Activated CD4-positive, alpha-beta T cell treated with anti-CD3 and anti-CD28 coated beads for 36 hours (primary cell): ENCODE measurements at regions of chr2 and their contacts with region 1.

Region 1: DNA sequence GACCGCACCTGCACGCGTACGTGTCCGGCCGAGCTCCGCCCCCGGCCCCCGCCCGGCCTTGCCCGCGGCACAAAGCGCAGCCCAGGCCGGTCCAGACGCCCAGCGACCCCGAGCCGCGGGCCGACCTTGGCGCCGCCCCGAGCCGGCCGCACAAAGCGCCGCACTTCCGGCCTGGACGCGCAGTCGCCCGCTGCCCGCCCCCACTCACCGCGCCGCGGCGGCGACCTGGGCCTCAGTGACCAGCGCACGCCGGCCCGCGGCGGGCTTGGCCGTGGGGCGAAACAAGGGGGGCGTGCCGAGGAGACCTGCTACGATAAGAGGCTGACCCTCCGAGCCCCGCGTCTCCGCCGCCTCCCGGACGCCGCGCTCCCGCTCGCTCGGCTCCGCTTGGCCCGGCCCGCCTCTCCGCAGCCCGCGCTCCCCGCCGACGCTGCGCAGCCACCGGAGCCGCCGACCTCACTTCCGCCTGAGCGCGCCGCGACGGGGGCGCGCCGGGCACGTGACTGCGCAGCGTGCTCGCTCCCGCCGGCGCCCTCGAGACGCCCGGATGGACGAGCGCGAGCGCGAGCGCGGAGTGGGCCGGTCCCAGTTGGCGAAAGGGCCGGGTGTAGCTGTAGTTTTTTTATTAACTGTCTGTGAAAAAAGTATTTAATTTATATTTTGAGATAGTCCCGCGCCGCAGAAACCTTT is at the start of gene FAM168B:
- DNase-seq: peak; percentile 93
- ATAC-seq: peak; percentile 85
- H3K4me3 Mint-ChIP-seq: peak within 1 kb of the TSS; percentile 81
- H3K27ac Mint-ChIP-seq: peak within 1 kb of the TSS; percentile 97
- H3K4me1 Mint-ChIP-seq: peaks cover 26% of the 10 kb centered on the region
- H3K27me3 Mint-ChIP-seq: no peaks in the 10 kb centered on the region
- total RNA-seq, gene FAM168B: 59.8 to 74.7 TPM

Region 2: DNA sequence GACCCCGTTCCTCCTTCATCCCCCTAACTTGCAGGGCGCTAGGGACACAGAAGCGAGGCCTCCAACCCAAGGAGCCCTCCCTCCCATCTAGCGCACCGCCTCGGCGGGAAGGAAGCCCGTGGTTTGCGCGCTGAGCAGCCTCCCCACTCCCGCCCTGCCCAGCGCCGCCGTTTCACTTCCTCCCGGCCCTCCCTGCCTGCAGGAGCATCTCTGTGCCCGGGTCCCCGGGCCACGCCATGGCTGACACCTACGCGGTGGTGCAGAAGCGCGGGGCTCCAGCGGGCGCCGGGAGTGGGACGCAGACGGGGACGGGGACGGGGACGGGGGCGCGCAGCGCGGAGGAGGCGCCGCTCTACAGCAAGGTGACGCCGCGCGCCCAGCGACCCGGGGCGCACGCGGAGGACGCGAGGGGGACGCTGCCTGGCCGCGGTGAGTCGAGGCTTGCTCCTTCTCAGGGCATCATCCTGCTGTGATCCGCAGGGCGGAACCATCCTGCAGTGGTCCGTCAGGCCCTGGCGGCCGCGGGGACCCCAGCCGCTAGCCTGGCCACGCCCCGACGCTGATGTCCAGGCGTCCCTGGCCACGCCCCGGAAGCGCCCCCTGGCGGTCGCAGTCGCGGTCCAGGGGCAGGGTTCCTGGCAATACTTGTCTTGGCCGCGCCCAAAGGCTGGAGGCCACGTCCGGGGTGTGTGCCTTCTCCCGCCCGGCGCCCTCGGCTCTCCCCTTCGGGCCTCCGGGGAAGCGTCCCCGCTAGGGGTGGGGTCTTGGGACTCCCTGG is 720.9 kb before region 1 on chr2:
- CTCF ChIA-PET with region 1: no interaction called
- POLR2A ChIA-PET with region 1: no interaction called
- intact Hi-C with region 1: loop called in 1 of 2 experiments (anchors 10 kb)
- DNase-seq: peak; percentile 85
- ATAC-seq: peak; percentile 68
- H3K4me3 Mint-ChIP-seq: peak overlapping the region; percentile 84
- H3K27ac Mint-ChIP-seq: peak overlapping the region; percentile 96
- H3K4me1 Mint-ChIP-seq: peaks cover 60% of the 10 kb centered on the region
- H3K27me3 Mint-ChIP-seq: no peaks in the 10 kb centered on the region

Region 3: GRCh38 chr2:130727286-130728018 is 365.7 kb before region 1 on chr2:
- CTCF ChIA-PET with region 1: no interaction called
- POLR2A ChIA-PET with region 1: no interaction called
- intact Hi-C with region 1: loop called in 1 of 2 experiments (anchors 1 kb)
- DNase-seq: peak; percentile 93
- ATAC-seq: peak; percentile 97
- H3K4me3 Mint-ChIP-seq: peak overlapping the region; percentile 67
- H3K27ac Mint-ChIP-seq: peak overlapping the region; percentile 55
- H3K4me1 Mint-ChIP-seq: peaks cover 3% of the 10 kb centered on the region
- H3K27me3 Mint-ChIP-seq: peaks cover 8% of the 10 kb centered on the region

Region 4: DNA sequence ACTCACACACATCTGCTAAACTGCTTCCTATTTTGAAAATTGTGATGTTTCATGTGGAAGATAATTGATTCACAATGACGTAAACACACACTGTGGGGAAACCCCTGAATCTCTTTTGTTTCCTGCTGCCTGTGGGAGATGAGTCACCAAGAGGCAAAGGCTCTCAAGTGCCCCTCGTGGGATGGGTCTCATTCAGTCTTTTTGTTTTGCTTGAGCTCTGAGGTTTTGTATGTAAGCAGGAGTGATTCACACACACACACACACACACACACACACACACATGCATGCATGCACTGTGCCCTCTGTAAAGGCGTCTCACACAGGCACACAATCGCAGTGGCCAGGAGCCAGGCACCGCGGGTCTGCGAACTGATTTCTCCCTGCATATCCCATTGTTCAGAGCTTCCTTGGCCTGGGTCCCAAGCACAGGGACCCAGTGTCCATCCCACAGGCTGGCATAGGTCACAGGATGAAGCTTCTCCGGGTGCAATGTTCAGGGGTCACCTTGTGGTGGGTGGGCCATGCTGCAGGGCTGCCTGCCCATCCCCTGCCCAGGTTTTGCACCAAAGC is 268.6 kb before region 1 on chr2:
- CTCF ChIA-PET with region 1: no interaction called
- POLR2A ChIA-PET with region 1: no interaction called
- intact Hi-C with region 1: loop called in 1 of 2 experiments (anchors 5 kb)
- DNase-seq: peak; percentile 80
- ATAC-seq: peak; percentile 95
- H3K4me3 Mint-ChIP-seq: peak overlapping the region; percentile 35
- H3K27ac Mint-ChIP-seq: peak overlapping the region; percentile 89
- H3K4me1 Mint-ChIP-seq: peaks cover 20% of the 10 kb centered on the region
- H3K27me3 Mint-ChIP-seq: no peaks in the 10 kb centered on the region

Region 5: DNA sequence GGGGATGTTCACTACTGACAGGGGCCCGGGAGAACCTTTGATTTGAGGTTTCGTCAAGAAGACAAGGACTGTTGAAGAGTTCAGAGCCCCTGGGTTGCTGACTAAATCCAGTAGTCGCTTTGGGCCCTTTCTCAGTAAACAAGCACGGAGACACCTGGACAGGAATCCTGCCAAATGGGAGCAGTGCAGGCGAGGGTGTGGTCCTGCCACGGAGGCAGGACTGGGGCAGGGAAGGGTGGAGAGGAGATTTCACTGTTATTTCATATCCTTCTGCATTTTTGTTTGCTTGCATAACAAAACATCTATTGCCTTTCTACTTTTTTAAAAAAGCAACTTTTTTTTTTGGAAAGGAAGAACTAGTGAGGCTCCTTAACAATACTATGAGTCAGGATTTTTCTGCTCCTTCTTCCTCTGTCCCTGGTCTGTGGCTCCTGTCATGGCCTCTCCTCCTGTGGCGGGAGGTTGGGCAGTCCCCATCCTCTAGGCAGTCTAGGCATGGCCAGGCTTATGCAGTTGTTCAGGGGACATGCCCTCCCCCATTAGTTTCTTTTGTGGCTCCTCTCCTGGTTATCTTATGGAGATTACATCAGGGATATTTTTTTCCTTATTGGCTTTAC is 198.7 kb before region 1 on chr2:
- CTCF ChIA-PET with region 1: no interaction called
- POLR2A ChIA-PET with region 1: no interaction called
- intact Hi-C with region 1: no loop called
- DNase-seq: no peak
- ATAC-seq: no peak
- H3K4me3 Mint-ChIP-seq: no peak overlapping the region
- H3K27ac Mint-ChIP-seq: no peak overlapping the region
- H3K4me1 Mint-ChIP-seq: no peaks in the 10 kb centered on the region
- H3K27me3 Mint-ChIP-seq: peaks cover 11% of the 10 kb centered on the region

Region 6: GRCh38 chr2:131076707-131077106 is 16.4 kb before region 1 on chr2:
- CTCF ChIA-PET with region 1: no interaction called
- POLR2A ChIA-PET with region 1: no interaction called
- intact Hi-C with region 1: no loop called
- DNase-seq: no peak
- ATAC-seq: no peak
- H3K4me3 Mint-ChIP-seq: no peak overlapping the region
- H3K27ac Mint-ChIP-seq: no peak overlapping the region
- H3K4me1 Mint-ChIP-seq: peaks cover 25% of the 10 kb centered on the region
- H3K27me3 Mint-ChIP-seq: no peaks in the 10 kb centered on the region

Region 7: DNA sequence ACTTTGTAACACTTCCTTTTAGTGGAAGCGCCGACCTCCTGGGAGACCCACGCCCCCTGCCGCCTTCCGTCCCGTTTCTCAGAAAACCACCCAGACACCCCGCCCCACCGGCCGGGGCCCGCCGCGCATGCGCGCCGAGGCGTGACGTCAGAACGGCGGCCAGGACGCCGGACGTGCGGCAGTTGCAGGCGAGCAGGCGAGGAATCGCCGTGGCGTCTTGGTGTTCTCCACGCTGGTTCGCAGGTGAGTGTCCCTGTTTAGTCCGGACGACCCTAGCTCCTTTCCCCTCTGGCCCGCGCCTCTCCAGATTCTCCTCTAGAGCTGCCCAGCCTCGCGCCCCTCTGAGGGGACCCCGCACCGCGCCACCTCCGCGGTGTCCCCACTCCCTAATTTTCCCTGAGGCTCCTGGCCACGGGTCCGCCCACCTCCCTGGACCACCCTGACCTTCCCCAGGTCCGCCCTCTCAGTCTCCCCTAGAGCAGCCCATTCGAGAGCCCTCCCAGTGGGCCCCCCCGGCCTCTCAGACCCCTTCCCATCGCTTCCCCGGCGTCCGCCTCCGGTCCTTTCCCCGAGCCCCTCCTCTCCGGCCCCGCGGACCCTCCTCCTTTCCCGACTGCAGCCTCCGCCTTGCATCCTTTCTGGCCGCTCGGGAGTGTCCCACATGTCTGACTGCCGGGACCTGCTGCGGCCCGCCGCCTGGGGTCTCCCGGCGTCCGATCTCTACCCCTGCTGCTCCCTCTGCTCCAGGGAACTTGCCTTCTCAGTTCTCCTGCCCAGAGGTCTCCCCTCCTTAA is 12.2 kb after region 1 on chr2 and contains the start of gene PLEKHB2:
- CTCF ChIA-PET with region 1: interaction called, 30 read pairs
- POLR2A ChIA-PET with region 1: interaction called, 7 read pairs
- intact Hi-C with region 1: loop called (anchors 1 kb)
- DNase-seq: peak; percentile 94
- ATAC-seq: peak; percentile 66
- H3K4me3 Mint-ChIP-seq: peak within 1 kb of the TSS; percentile 98
- H3K27ac Mint-ChIP-seq: peak within 1 kb of the TSS; percentile 99
- H3K4me1 Mint-ChIP-seq: peaks cover 43% of the 10 kb centered on the region
- H3K27me3 Mint-ChIP-seq: no peaks in the 10 kb centered on the region
- total RNA-seq, gene PLEKHB2: 39.9 to 42.4 TPM

Region 8: GRCh38 chr2:131143803-131144202 is 50.7 kb after region 1 on chr2:
- CTCF ChIA-PET with region 1: no interaction called
- POLR2A ChIA-PET with region 1: no interaction called
- intact Hi-C with region 1: no loop called
- DNase-seq: no peak
- ATAC-seq: no peak
- H3K4me3 Mint-ChIP-seq: no peak overlapping the region
- H3K27ac Mint-ChIP-seq: no peak overlapping the region
- H3K4me1 Mint-ChIP-seq: peaks cover 5% of the 10 kb centered on the region
- H3K27me3 Mint-ChIP-seq: no peaks in the 10 kb centered on the region

Region 9: GRCh38 chr2:131154071-131154531 is 61.0 kb after region 1 on chr2:
- CTCF ChIA-PET with region 1: no interaction called
- POLR2A ChIA-PET with region 1: interaction called, 3 read pairs
- intact Hi-C with region 1: loop called in 1 of 2 experiments (anchors 1 kb)
- DNase-seq: peak; percentile 93
- ATAC-seq: peak; percentile 99
- H3K4me3 Mint-ChIP-seq: no peak overlapping the region
- H3K27ac Mint-ChIP-seq: peak overlapping the region; percentile 1
- H3K4me1 Mint-ChIP-seq: peaks cover 31% of the 10 kb centered on the region
- H3K27me3 Mint-ChIP-seq: no peaks in the 10 kb centered on the region

Region 10: GRCh38 chr2:131682122-131682944 is 589.2 kb after region 1 on chr2:
- CTCF ChIA-PET with region 1: no interaction called
- POLR2A ChIA-PET with region 1: no interaction called
- intact Hi-C with region 1: loop called in 1 of 2 experiments (anchors 5 kb)
- DNase-seq: peak; percentile 88
- ATAC-seq: peak; percentile 99
- H3K4me3 Mint-ChIP-seq: peak overlapping the region; percentile 82
- H3K27ac Mint-ChIP-seq: peak overlapping the region; percentile 76
- H3K4me1 Mint-ChIP-seq: peaks cover 32% of the 10 kb centered on the region
- H3K27me3 Mint-ChIP-seq: peaks cover 3% of the 10 kb centered on the region